Left colon (tissue), 2 donors: ENCODE measurements at regions of chr1 and their contacts with region 1.

Region 1: DNA sequence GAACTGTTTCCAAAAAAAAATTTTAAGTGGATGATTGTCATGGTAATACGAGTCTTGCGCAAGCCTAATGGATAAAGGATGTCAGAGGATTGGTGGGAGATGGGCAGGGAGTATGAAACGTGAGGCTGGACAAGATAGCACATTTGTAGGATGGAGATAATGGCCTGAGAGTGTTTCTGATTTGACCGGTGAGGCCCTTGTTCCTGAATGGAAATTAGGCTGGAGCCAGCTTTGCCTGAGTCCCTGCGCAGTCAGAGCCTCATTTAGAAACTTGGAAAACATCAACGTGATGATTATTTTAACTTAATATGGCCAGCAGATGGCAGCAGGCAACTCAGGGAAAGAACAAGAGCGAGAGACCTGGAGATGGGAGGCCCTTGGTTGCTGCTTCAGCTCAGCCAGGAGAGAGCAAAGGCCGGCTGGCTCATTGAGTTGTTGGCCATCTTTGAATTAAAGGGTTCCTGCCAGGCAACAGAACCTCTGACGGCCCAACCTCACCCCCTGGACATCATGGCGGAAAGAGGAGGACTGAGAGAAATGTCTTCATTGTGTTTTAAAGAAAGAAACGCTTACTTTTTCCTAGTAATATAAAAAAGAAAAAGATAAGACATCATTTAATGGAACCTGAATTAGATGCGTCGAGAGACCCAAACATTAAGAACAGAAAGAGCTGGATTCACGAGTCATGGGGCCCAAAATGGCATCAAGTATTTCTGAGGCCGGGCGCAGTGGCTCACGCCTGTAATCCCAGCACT is 80.3 kb downstream of the SELENOF start:
- DNase-seq: peak; percentile 72 to 81
- ATAC-seq: peak; percentile 93

Region 2: DNA sequence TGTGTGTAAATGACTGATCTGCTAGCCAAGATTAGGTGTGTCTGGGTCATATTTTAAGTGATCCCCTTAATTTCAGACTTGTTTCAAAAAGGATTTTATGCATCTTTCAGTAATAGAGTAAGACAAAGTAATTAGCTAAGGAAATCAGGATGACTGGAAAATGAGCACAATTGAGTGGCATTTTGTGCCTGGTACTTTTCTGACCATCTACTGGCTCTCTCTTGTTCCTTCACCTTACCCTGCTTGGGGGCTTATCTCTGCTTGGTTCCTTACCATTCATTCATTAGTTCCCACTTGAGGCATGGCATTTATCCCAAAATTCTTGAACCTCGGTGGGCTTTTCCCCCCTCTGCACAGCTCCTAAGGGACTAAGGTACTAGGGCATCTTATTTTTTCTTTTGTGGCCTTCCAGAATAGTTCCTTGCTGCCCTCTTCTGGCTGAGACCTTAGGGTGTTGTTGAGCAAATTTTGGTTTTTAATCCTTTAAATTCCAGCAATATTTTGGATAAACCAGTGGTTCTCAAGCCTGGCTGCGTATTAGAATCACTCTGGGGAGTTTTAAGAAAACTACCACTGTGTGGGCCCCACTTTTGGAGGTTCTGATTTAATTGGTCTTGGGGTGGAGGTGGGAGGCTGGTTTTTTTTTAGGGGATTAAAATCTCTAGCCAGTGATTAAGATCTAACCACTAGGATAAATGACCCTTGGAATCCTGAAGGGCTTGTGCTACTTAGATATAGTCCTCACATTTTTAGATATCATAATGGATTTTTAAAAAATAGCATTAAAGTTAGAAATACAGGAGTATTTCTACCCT is 131.6 kb after region 1 on chr1:
- intact Hi-C with region 1: loop called (anchors 5 to 10 kb)
- DNase-seq: peak in 1 of 2 donors; percentile 18
- ATAC-seq: peak; percentile 45

Region 3: GRCh38 chr1:87084244-87084836 is 250.7 kb after region 1 on chr1:
- intact Hi-C with region 1: loop called in 1 of 2 experiments (anchors 5 kb)
- DNase-seq: no peak
- ATAC-seq: no peak

Region 4: DNA sequence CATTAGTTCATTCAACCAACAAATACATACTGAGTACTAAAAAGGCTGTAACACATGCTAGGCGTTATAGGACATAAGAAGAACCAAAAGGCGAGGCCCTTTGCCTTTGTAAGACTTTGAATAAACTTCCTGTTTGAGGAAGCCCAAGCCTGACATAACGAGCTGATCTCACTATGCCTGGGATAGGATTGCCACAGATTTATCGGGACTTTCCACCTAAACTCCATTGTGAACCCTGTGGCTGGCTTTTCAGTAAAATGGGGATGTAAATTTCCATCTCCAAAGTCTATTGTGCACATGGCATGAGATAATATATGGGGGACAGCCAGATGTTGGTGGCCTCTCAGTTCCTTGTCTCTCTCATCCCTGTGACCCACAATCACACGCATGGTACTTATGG is 536.9 kb after region 1 on chr1:
- intact Hi-C with region 1: no loop called
- DNase-seq: no peak
- ATAC-seq: no peak